ENCODE measurements at regions of chr18 and their contacts with region 1.

Region 1: GRCh38 chr18:2932247-2933181 is 80.4 kb downstream of the LPIN2 start:
- DNase-seq: peak in 2 of 5 donors; percentile 88 to 89
- H3K4me3 ChIP-seq: no peak overlapping the region
- H3K27ac ChIP-seq: no peak overlapping the region
- H3K4me1 ChIP-seq: peaks cover 0 to 4% (median 0%) of the 10 kb centered on the region in 3 donors
- H3K27me3 ChIP-seq: no peaks in the 10 kb centered on the region
- CTCF ChIP-seq: peak; percentile 58

Region 2: GRCh38 chr18:2985628-2986027 is 53.1 kb after region 1 on chr18:
- intact Hi-C with region 1: loop called (anchors 10 kb)
- DNase-seq: no peak
- H3K4me3 ChIP-seq: no peak overlapping the region
- H3K27ac ChIP-seq: peak overlapping the region in 1 of 2 donors; percentile 42
- H3K4me1 ChIP-seq: peaks cover 17 to 52% (median 28%) of the 10 kb centered on the region in 3 donors
- H3K27me3 ChIP-seq: no peaks in the 10 kb centered on the region
- CTCF ChIP-seq: peak; percentile 31

Region 3: GRCh38 chr18:2997846-2998564 is 65.5 kb after region 1 on chr18:
- intact Hi-C with region 1: no loop called
- DNase-seq: peak in 2 of 5 donors; percentile 27 to 53
- H3K4me3 ChIP-seq: peak overlapping the region in 1 of 3 donors; percentile 3
- H3K27ac ChIP-seq: peak overlapping the region in 1 of 2 donors; percentile 76
- H3K4me1 ChIP-seq: peaks cover 4 to 7% (median 5%) of the 10 kb centered on the region in 3 donors
- H3K27me3 ChIP-seq: no peaks in the 10 kb centered on the region
- CTCF ChIP-seq: no peak

Region 4: DNA sequence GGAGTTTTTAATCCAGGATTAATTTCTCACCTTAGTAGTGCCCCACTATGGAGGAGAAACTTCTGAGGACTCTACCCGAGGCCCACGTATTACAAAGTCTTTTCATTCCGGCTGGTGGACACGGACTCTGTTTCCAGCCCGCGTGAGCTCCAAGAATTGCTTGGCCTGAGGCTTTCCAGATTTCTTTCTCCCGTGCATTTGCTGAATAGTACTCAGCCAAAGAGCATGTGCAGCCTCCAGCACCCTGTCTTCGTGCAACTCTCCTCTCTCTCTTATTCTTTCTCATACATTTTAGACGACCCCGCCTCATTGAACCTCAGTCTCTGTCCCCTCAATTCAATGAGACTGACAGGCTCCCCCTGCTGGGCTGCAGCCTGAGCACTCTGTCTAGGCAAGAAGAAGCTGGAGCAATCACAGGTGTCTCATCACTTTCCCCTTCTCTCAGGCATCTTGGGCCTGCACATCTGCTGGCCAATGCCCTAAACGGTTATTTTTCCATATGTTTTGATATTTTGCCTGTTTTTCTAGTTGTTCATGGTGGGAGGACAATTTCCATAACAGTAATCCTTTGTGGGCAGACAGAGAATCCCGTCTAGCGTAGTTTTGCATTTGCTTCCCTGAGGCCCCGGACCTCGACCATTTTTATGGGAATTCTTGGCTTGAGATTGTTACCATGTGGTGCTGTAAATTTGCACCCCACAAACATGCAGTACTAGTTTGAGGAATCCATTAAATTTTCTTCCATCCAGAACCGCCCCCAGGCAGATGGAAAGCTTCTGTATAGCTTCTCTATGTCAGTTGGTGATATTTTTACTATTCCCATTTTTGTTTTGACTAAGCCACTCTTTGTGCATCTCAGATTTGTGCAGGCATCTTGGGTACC is 130.5 kb after region 1 on chr18:
- intact Hi-C with region 1: loop called (anchors 10 kb)
- DNase-seq: peak; percentile 63 to 89 (median 75)
- H3K4me3 ChIP-seq: peak overlapping the region in 2 of 3 donors; percentile 45 to 53
- H3K27ac ChIP-seq: peak overlapping the region; percentile 3 to 33
- H3K4me1 ChIP-seq: peaks cover 7 to 22% (median 14%) of the 10 kb centered on the region in 3 donors
- H3K27me3 ChIP-seq: no peaks in the 10 kb centered on the region
- CTCF ChIP-seq: peak; percentile 78

Region 5: DNA sequence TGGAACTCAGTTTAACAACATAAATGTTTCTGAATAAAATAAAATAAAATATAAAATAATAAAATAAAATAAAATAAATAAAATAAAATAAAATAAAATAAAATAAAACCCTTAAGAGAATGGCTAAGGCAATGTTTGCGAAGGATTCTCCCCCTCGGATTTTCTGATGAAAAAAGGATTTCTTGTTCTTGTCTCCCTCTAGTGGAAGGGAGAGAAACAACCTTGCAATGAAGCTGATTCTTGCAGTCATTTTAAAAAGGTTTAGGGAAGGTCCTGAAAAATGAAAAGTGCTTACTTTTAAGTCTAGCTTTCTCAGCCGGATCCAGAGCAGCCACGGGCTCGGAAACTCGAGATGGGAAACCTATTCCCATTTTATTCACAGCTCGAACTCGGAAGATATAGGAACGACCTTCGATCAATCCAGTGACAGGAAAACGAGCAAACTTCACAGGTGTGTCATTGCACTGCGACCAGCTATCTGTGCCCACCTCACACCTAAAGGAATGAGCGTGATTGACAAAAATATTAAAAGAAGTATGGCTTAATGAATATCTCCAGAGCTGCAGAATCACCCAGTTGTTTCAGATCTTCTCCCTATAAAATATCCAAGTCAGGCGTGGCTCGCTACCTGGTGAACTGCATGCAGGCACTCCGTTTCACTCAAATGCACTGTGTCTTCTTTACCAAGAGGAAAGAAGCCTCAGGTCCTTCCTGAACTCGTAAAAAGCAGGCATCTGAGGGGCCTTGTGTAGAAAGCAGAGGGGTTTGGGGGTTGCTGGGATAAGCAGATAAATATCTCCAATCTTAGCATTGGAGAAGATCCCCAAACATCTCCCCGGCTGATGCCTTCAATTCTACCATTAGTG is 219.1 kb after region 1 on chr18:
- intact Hi-C with region 1: loop called (anchors 5 kb)
- DNase-seq: peak in 2 of 5 donors; percentile 56 to 71
- H3K4me3 ChIP-seq: peak overlapping the region in 1 of 3 donors; percentile 30
- H3K27ac ChIP-seq: no peak overlapping the region
- H3K4me1 ChIP-seq: peaks cover 0 to 5% (median 3%) of the 10 kb centered on the region in 3 donors
- H3K27me3 ChIP-seq: no peaks in the 10 kb centered on the region
- CTCF ChIP-seq: peak; percentile 68

Region 6: GRCh38 chr18:3245853-3246634 is 313.5 kb after region 1 on chr18:
- intact Hi-C with region 1: loop called (anchors 10 kb)
- DNase-seq: peak; percentile 91 to 96 (median 95)
- H3K4me3 ChIP-seq: peak overlapping the region; percentile 72 to 98 (median 97)
- H3K27ac ChIP-seq: peak overlapping the region; percentile 97 to 100
- H3K4me1 ChIP-seq: peaks cover 2 to 14% (median 7%) of the 10 kb centered on the region in 3 donors
- H3K27me3 ChIP-seq: no peaks in the 10 kb centered on the region
- CTCF ChIP-seq: peak; percentile 92